PC-9 (cell line): ENCODE measurements at regions of chr12 and their contacts with region 1.

Region 1: DNA sequence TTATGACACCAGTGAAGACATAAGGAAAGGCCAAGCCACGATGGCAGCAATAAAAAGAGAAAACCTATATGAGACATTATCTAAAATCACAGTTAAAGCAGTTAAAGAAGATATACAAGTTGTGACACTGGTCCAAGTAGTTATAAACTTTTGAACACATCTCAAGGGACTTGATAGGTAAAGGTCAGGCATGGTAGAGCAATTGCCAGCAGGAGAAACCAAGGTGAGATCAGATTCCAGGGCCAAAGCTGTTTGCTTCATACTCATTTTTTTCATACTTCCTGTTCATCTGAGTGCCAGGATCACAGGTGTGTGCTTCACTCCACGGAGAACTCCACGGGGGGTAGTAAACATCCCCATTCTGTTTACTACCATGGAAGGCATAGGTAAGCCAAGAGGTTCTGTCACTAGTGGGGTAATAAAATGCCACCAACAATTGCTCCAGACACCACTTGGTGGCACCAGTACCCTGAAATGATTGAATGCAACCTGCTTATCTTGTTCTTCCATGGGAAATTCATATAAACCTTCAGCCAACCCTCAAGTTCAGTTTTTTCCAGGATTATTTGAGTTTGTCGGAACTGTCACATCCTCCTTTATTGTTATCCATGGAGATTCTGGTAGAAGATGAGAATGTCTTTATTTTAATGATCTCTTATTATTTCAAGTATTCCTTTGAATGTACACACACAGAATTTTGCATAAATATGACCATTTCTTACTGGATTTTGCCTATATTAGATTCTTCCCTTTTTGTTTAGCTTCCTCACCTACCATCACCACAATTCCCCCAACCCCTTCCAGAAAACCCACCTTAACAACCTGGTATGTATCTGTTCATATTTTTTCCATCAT is 59.2 kb upstream of the TSPAN8 start:
- DNase-seq: peak; percentile 18 to 36
- H3K4me3 ChIP-seq: no peak overlapping the region
- H3K27ac ChIP-seq: no peak overlapping the region
- H3K4me1 ChIP-seq: no peaks in the 10 kb centered on the region
- H3K27me3 ChIP-seq: no peaks in the 10 kb centered on the region
- CTCF ChIP-seq: peak; percentile 61

Region 2: DNA sequence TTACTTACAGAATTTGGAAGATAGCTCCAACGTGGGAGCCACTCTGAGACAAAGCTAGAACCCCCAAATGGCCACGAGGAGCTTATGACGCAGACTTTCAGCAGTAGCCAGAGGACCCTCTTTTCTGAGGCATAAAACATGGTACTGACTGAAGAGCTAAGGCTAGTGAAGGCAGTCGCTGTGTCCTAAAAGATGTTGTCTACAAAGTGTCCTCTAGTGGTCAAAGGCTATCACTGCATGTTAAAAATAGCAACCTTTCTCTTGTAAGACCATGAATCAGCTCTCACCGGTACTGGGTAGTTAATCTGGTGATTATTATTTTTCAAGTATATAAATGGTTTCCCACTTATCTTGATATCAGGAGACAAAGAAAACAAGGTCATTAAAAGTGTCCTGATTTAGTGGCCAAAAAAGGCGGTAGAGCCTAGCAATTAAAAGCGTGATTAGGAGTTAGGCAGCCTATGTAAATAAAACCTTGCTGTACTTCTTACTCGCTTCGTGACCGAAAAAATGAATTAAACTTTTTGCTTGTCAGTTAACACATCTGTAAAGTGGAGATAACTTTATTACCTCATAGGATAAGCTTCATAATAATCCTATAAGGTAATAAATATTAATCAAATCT is 175.7 kb after region 1 on chr12:
- CTCF ChIA-PET with region 1: no interaction called
- POLR2A ChIA-PET with region 1: no interaction called
- intact Hi-C with region 1: loop called (anchors 10 kb)
- DNase-seq: peak; percentile 5 to 34
- H3K4me3 ChIP-seq: no peak overlapping the region
- H3K27ac ChIP-seq: no peak overlapping the region
- H3K4me1 ChIP-seq: no peaks in the 10 kb centered on the region
- H3K27me3 ChIP-seq: no peaks in the 10 kb centered on the region
- CTCF ChIP-seq: peak; percentile 86

Region 3: GRCh38 chr12:71551529-71551928 is 334.6 kb after region 1 on chr12:
- CTCF ChIA-PET with region 1: no interaction called
- POLR2A ChIA-PET with region 1: no interaction called
- intact Hi-C with region 1: loop called (anchors 10 kb)
- DNase-seq: no peak
- H3K4me3 ChIP-seq: no peak overlapping the region
- H3K27ac ChIP-seq: no peak overlapping the region
- H3K4me1 ChIP-seq: no peaks in the 10 kb centered on the region
- H3K27me3 ChIP-seq: no peaks in the 10 kb centered on the region
- CTCF ChIP-seq: peak; percentile 53; the same call in 1 of the 2 replicates

Region 4: DNA sequence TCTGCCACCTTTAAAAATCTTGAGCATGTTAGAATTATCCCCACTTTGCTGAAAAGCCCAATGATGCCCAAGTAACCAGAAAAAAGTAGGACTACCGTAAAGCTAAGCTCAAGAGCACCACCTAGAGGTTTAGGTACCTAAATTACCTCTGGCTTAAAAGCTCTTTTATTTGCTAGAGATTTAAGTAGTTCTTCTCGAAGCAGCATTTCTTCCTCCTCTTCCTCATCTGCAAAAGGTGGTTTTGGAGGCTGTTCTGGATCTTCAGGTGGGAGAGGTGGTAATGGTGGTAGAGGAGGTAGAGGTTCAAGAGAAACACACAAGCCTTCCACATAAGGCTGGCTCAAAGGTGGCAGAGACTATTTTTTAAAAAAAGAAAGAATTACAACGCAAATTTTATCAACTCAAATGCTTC is 419.8 kb after region 1 on chr12:
- CTCF ChIA-PET with region 1: no interaction called
- POLR2A ChIA-PET with region 1: no interaction called
- intact Hi-C with region 1: loop called (anchors 10 kb)
- DNase-seq: peak in 1 of 2 experiments; percentile 53
- H3K4me3 ChIP-seq: no peak overlapping the region
- H3K27ac ChIP-seq: no peak overlapping the region
- H3K4me1 ChIP-seq: no peaks in the 10 kb centered on the region
- H3K27me3 ChIP-seq: no peaks in the 10 kb centered on the region
- CTCF ChIP-seq: peak; percentile 76